Activated CD4-positive, alpha-beta T cell treated with anti-CD3 and anti-CD28 coated beads for 36 hours (primary cell): ENCODE measurements at regions of chr4 and their contacts with region 1.

Region 1: GRCh38 chr4:42656944-42657792 is at the start of gene ATP8A1:
- DNase-seq: peak; percentile 97
- ATAC-seq: peak; percentile 88
- H3K4me3 Mint-ChIP-seq: peak within 1 kb of the TSS; percentile 84
- H3K27ac Mint-ChIP-seq: peak within 1 kb of the TSS; percentile 97
- H3K4me1 Mint-ChIP-seq: peaks cover 39% of the 10 kb centered on the region
- H3K27me3 Mint-ChIP-seq: no peaks in the 10 kb centered on the region
- total RNA-seq, gene ATP8A1: 15.1 to 21.1 TPM

Region 2: GRCh38 chr4:41990365-41991111 is 666.6 kb before region 1 on chr4 and contains the start of gene SLC30A9:
- CTCF ChIA-PET with region 1: no interaction called
- POLR2A ChIA-PET with region 1: no interaction called
- intact Hi-C with region 1: loop called in 1 of 2 experiments (anchors 1 kb)
- DNase-seq: peak; percentile 95
- ATAC-seq: peak; percentile 97
- H3K4me3 Mint-ChIP-seq: peak within 1 kb of the TSS; percentile 93
- H3K27ac Mint-ChIP-seq: peak within 1 kb of the TSS; percentile 97
- H3K4me1 Mint-ChIP-seq: peaks cover 25% of the 10 kb centered on the region
- H3K27me3 Mint-ChIP-seq: no peaks in the 10 kb centered on the region
- total RNA-seq, gene SLC30A9: 55.8 to 59.6 TPM

Region 3: DNA sequence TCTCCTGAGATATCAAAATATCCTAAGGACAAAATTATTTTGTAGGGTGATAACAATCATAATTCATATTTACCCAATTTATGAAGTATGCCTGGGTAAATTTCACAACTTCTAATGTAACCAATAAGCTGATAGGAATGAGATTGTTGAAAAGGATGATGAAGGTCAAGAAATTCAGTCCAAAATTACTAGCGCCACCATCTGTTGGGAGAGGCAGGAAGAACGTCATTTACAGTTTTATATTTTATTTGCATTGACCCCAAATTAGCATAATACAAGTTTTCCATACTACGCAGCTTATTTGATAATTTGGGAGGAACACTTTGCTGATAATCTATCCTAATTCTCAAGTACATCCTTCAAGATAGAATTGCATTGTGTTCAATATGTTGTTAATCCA is 79.0 kb before region 1 on chr4:
- CTCF ChIA-PET with region 1: no interaction called
- POLR2A ChIA-PET with region 1: no interaction called
- intact Hi-C with region 1: loop called in 1 of 2 experiments (anchors 2 kb)
- DNase-seq: no peak
- ATAC-seq: no peak
- H3K4me3 Mint-ChIP-seq: no peak overlapping the region
- H3K27ac Mint-ChIP-seq: no peak overlapping the region
- H3K4me1 Mint-ChIP-seq: peaks cover 9% of the 10 kb centered on the region
- H3K27me3 Mint-ChIP-seq: no peaks in the 10 kb centered on the region

Region 4: DNA sequence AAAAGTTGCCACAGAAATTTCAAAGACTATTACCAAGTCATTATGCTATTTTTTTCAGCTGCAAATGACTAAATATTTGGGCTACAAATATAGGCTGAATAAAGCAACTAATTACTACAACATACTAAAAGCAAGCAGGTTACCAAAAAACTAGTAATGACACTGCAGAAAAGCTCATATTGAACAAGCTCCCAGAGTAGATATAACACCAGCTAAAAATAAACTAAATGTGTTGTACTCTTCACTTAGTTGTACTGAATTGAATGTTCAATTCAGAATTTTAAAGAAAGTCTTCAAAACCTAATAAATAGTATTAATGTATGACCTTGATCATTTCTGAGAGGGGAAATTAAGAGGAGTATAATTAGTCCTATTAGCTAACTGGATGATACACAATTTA is 12.3 kb before region 1 on chr4:
- CTCF ChIA-PET with region 1: interaction called, 5 read pairs
- POLR2A ChIA-PET with region 1: interaction called, 4 read pairs
- intact Hi-C with region 1: loop called in 1 of 2 experiments (anchors 1 kb)
- DNase-seq: no peak
- ATAC-seq: no peak
- H3K4me3 Mint-ChIP-seq: no peak overlapping the region
- H3K27ac Mint-ChIP-seq: no peak overlapping the region
- H3K4me1 Mint-ChIP-seq: peaks cover 59% of the 10 kb centered on the region
- H3K27me3 Mint-ChIP-seq: no peaks in the 10 kb centered on the region

Region 5: DNA sequence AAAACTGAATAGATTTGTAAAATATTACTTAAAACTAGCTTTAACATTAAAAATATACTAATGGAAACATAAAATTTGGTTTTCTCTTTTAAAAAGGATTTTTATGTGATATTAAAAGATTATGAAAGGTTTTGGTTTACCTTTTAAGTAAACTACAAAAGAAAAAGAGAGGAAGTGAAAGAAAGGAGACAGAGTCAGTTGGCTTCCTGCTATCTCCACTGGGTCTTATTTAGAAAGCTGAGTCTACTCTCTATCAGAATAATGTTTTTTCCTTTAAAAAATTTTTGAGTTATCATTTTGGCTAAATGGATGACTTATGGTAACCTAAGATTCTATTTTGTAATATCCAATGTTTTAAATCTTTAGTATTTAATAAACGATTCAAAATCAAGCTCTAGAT is 21.3 kb after region 1 on chr4:
- CTCF ChIA-PET with region 1: interaction called, 14 read pairs
- POLR2A ChIA-PET with region 1: interaction called, 8 read pairs
- intact Hi-C with region 1: no loop called
- DNase-seq: no peak
- ATAC-seq: no peak
- H3K4me3 Mint-ChIP-seq: no peak overlapping the region
- H3K27ac Mint-ChIP-seq: no peak overlapping the region
- H3K4me1 Mint-ChIP-seq: peaks cover 12% of the 10 kb centered on the region
- H3K27me3 Mint-ChIP-seq: no peaks in the 10 kb centered on the region